ENCODE measurements at regions of chr14 and their contacts with region 1.

Region 1: DNA sequence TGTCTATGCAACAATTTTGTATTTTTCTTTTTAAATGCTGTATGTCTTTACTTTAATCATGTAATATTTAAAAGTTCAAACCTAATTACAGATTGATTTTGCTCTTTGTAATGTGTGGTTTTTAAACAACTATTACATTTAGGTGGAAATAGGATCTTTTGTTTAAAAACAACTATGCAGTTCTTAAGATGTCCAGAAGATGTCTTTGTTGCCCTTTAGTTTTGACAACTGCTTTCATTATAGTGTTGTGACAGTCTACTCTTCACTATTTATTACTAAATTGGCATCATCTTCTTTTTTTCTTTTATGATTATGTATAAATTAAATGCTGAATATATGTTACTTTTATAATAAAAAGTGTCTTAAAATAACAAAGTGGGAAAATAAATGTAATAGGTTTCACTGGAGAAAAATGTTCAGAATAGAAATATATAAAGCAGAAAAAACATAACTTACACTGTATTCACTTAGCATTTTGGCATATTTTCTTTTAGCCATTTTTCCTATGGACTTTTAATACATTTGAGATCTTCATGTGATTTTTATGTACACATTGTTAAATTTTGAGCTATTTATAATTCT is 27.1 kb upstream of the PCNX4 start:
- DNase-seq: peak; percentile 48
- H3K4me3 ChIP-seq: no peak overlapping the region
- H3K27ac ChIP-seq: no peak overlapping the region
- H3K4me1 ChIP-seq: no peaks in the 10 kb centered on the region
- H3K27me3 ChIP-seq: peaks cover 0 to 2% of the 10 kb centered on the region in 2 experiments
- CTCF ChIP-seq: peak; percentile 18 to 25
- POLR2A ChIP-seq: no peak

Region 2: DNA sequence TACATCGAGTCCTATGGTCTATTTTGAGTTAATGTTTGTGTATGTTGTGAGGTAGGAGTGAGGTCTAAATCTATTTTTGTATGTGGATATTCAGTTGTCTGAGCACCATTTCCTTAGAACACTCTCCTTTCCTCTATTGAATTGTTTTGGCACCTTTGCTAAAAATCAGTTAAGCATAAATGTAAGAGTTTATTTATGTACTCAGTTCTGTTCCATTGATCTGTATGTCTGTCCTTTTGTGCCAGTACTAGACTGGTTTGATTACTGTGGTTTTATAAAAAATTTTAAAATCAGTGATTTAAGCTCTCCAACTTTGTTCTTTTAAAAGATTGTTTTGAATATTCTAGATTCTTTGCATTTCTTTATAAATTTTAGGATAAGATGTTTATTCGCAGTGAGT is 43.0 kb before region 1 on chr14:
- CTCF ChIA-PET with region 1: no interaction called
- POLR2A ChIA-PET with region 1: no interaction called
- dilution Hi-C with region 1: no loop called
- intact Hi-C with region 1: no loop called
- DNase-seq: no peak
- H3K4me3 ChIP-seq: no peak overlapping the region
- H3K27ac ChIP-seq: no peak overlapping the region
- H3K4me1 ChIP-seq: no peaks in the 10 kb centered on the region
- H3K27me3 ChIP-seq: peaks cover 0 to 3% of the 10 kb centered on the region in 2 experiments
- CTCF ChIP-seq: no peak
- POLR2A ChIP-seq: no peak

Region 3: DNA sequence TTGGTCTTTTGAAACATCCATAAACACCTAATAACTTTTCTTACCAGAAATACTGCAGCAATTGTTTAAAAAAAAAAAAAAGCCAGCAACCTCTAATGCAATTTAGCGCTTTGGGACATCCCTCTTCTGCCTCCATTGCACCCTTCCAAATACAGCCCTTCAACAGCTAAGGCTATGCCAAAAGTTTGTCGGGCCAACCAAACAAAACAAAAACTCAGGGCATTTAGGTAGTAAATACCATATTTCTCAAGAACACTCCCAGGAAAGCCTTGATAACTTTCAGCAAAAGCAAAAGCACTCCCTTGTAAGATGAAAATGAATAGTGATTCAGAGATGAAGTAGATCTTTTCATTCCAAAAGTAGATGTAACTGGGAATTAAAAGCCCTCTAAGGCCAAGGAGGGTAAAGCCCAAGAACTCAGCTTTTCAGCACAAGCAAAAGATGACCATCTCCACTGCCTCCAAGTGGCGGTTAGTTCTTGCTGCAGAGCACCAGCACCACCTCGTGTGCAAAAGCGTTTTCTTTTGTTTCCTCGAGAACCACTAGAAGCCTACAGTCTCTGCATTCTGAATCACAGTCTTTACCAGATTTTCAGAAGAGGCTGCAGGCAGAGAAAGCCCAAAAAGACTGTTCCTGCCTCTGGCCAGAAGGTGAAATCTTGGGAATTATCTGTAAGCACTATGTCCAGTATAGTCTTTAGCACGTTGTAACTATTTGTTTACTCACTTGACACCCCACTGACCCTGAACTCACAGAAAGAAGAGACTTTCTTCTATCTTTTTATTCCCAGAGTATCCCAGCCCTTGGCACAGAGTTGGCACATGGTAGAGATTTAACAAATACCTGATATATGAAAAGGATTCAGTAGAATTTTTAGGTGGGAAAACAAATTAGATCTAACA is 497.5 kb after region 1 on chr14:
- CTCF ChIA-PET with region 1: interaction called, 3 read pairs
- POLR2A ChIA-PET with region 1: no interaction called
- dilution Hi-C with region 1: no loop called
- intact Hi-C with region 1: loop called (anchors 5 kb)
- DNase-seq: peak; percentile 59
- H3K4me3 ChIP-seq: no peak overlapping the region
- H3K27ac ChIP-seq: no peak overlapping the region
- H3K4me1 ChIP-seq: no peaks in the 10 kb centered on the region
- H3K27me3 ChIP-seq: peaks cover 0 to 8% of the 10 kb centered on the region in 2 experiments
- CTCF ChIP-seq: peak; percentile 45 to 70
- POLR2A ChIP-seq: no peak

Measured in endothelial cell of umbilical vein (primary cell).